ENCODE measurements at regions of chrX and their contacts with region 1.

Region 1: DNA sequence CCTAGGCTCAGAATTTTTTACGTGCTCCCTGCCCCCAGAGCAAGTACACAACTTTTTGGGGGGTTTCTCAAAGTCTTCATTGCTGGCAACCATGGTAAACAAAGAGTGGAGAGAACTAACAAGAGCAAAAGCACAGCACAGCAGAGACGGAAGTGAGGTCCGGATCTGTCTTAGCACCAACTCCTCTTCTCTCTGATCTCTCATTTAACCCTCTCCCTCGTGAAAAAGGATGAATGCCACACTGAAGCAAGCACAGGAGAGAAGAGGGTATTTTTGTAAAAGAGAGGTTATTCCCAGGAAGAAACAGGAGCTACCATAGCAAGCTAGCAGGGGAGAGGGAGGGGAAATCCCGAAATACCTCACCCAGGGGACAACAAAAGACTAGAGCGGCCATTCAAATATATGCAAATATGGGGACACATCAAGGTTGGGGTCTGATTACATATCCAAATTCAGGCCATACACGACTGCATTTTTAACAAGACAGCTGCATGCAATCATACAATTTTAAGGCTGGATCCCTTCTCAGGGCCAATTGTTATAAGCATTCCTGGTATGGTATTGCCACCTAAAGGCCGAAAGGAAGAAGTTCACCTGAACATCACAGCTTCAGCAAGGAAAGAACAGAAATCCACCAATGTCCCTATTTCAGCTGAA is 46.6 kb downstream of the CD40LG start:
- DNase-seq: peak; percentile 54
- CTCF ChIP-seq: peak; percentile 52

Region 2: DNA sequence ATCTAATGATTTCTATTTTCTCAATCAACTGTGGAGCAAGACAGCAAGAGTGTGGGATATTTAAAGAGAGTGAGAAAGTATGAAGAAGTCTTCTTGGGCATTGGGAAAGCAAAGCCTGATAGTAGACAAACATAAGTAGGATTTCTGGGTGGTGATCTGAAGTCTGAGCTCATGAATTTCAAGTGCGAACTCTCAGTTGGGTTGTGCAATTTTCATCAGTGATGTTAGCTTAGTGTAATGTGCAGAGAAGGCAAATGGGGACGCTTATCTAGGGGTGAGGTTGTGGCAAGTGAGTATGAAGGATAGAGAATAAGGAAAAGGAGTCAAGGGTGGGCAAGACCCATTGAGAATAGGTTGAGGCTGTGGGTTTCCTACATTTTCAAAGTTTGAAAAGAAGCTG is 138.9 kb before region 1 on chrX:
- CTCF ChIA-PET with region 1: no interaction called
- POLR2A ChIA-PET with region 1: no interaction called
- DNase-seq: no peak
- CTCF ChIP-seq: no peak

Region 3: DNA sequence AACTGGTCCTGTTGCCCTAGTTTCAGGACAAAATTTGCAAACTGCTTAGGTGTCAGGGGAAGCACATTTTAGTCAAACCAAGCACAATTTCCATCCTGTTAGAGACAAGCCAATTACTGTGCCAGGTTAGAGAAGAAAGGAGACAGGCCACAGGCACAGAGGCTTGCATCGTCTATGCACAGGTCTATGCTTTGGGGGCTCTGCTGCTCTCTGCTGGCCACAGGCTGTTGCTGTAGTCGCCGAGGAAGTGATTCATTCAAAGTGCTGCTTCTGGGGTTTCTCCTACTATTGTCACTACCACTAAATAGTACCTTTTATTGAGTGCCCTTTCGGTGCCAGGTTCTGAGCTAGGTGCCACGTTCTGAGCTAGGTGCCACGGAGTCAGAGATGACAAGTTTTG is 117.0 kb before region 1 on chrX:
- CTCF ChIA-PET with region 1: interaction called, 15 read pairs
- POLR2A ChIA-PET with region 1: no interaction called
- DNase-seq: peak; percentile 40
- CTCF ChIP-seq: peak; percentile 49

Region 4: GRCh38 chrX:136608295-136609171 is 86.0 kb before region 1 on chrX:
- CTCF ChIA-PET with region 1: interaction called, 34 read pairs
- POLR2A ChIA-PET with region 1: no interaction called
- DNase-seq: peak; percentile 22
- CTCF ChIP-seq: peak; percentile 17

Region 5: GRCh38 chrX:136708348-136708747 is 13.8 kb after region 1 on chrX:
- CTCF ChIA-PET with region 1: interaction called, 30 read pairs
- POLR2A ChIA-PET with region 1: no interaction called
- DNase-seq: peak; percentile 11
- CTCF ChIP-seq: peak; percentile 36